ENCODE measurements at regions of chr5 and their contacts with region 1.

Region 1: DNA sequence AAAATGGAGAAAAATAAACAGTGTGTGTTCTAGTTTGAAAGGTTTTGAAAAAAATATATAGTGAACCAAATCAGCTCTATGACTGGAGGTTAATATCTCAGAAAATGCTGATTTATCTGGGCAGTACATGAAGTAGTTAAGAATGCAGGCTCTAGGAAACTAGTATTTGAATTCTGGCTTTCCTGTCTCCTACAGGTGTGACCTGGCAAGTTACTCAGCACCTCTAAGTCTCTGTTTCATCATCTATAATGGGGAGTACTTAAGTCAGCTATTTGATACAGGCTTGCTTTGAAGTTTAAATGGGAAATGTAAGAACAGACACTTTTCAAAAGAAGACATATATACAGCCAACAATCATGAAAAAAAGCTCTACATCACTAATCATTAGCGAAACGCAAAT is 5.2 kb downstream of the GRAMD2B start:
- DNase-seq: no peak
- H3K4me3 Mint-ChIP-seq: no peak overlapping the region
- H3K27ac Mint-ChIP-seq: no peak overlapping the region
- H3K4me1 Mint-ChIP-seq: peaks cover 13% of the 10 kb centered on the region
- H3K27me3 Mint-ChIP-seq: no peaks in the 10 kb centered on the region
- CTCF ChIP-seq: no peak

Region 2: GRCh38 chr5:126471875-126472537 is 43.6 kb after region 1 on chr5:
- CTCF ChIA-PET with region 1: no interaction called
- intact Hi-C with region 1: loop called (anchors 5 kb)
- DNase-seq: peak; percentile 40
- H3K4me3 Mint-ChIP-seq: peak overlapping the region; percentile 54
- H3K27ac Mint-ChIP-seq: peak overlapping the region; percentile 77
- H3K4me1 Mint-ChIP-seq: peaks cover 19% of the 10 kb centered on the region
- H3K27me3 Mint-ChIP-seq: no peaks in the 10 kb centered on the region
- CTCF ChIP-seq: no peak